ENCODE measurements at regions of chr1 and their contacts with region 1.

Region 1: DNA sequence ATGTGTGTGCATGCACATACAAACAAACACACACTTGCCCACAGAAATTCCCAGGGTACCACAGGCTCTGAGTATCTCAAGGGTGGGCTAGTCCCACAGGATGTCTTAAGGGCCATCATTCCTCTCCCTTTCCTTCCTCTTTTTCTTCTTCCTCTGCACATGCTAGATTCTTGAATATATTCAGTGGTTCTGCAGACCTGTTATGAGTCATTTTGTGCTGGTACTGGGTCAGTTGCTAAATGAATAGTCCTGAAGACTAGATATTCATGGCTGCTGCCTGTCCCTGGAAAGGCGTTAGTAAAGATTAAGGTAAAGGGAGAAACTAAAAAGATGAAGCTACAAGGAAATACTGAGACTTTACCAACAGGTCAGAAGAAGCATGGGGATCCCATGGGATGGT is 256.7 kb upstream of the KIAA0040 start:
- DNase-seq: no peak
- H3K4me3 ChIP-seq: no peak overlapping the region
- H3K27ac ChIP-seq: no peak overlapping the region
- H3K4me1 ChIP-seq: no peaks in the 10 kb centered on the region
- H3K27me3 ChIP-seq: no peaks in the 10 kb centered on the region
- CTCF ChIP-seq: no peak
- POLR2A ChIP-seq: no peak

Region 2: DNA sequence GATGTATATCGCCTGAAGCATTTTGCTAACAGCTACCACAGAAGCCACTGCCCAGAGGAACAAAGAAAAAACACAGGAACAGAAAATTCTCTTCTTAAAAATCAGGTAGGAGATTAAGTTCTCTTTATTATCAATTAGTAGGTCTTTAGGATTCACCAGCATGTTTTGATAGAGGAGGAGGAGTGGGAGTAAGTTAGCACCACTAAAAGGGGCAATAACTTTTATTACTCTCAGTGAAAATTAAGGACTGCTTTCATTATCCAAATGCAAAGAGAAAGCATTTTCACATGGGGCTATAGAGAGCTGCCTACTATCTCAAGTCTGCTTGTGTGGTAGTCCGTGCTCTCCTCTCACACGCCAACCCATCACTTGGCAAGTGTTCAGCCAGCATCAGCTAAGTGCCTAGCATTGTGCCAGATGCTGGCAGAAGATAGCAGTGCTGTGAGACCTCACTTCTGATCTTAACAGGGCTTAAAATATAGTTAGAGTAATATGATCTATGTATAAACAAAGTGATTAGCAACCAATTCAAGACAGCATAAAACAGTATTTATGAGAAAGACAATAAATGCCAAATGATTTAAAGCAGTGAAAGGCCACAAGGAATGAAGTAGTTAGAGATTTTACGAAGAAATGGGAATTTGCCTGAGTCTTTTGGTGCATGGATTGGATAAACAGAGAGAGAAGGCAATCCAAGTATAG is 1675.4 kb after region 1 on chr1:
- intact Hi-C with region 1: loop called (anchors 5 kb)
- DNase-seq: no peak
- H3K4me3 ChIP-seq: no peak overlapping the region
- H3K27ac ChIP-seq: no peak overlapping the region
- H3K4me1 ChIP-seq: no peaks in the 10 kb centered on the region
- H3K27me3 ChIP-seq: no peaks in the 10 kb centered on the region
- CTCF ChIP-seq: no peak
- POLR2A ChIP-seq: no peak

Measured in vagina (tissue), 2 donors.